ENCODE measurements at regions of chr10 and their contacts with region 1.

Region 1: GRCh38 chr10:75235375-75236177 is at the start of gene COMTD1:
- DNase-seq: peak; percentile 87
- ATAC-seq: peak; percentile 72
- H3K4me3 ChIP-seq: peak within 1 kb of the TSS; percentile 71 to 78
- H3K27ac ChIP-seq: peak within 1 kb of the TSS; percentile 92
- H3K4me1 ChIP-seq: peaks cover 2 to 27% of the 10 kb centered on the region in 2 experiments; a peak in 3 of 4 replicates
- H3K27me3 ChIP-seq: no peaks in the 10 kb centered on the region
- CTCF ChIP-seq: peak; percentile 99 to 100 (median 100)
- POLR2A ChIP-seq: no peak
- RAD21 ChIP-seq: peak; percentile 100
- total RNA-seq, gene COMTD1: 35.1 TPM

Region 2: GRCh38 chr10:74244097-74244685 is 991.4 kb before region 1 on chr10:
- CTCF ChIA-PET with region 1: interaction called, 11 read pairs
- POLR2A ChIA-PET with region 1: no interaction called
- RAD21 ChIA-PET with region 1: interaction called in 1 of 2 experiments, 3 read pairs
- intact Hi-C with region 1: loop called (anchors 5 kb)
- DNase-seq: peak; percentile 42
- ATAC-seq: no peak
- H3K4me3 ChIP-seq: no peak overlapping the region
- H3K27ac ChIP-seq: no peak overlapping the region
- H3K4me1 ChIP-seq: no peaks in the 10 kb centered on the region
- H3K27me3 ChIP-seq: no peaks in the 10 kb centered on the region
- CTCF ChIP-seq: peak; percentile 32 to 65 (median 60)
- POLR2A ChIP-seq: no peak
- RAD21 ChIP-seq: peak; percentile 73

Region 3: GRCh38 chr10:74262856-74263255 is 972.7 kb before region 1 on chr10:
- CTCF ChIA-PET with region 1: interaction called, 4 read pairs
- POLR2A ChIA-PET with region 1: no interaction called
- RAD21 ChIA-PET with region 1: no interaction called
- intact Hi-C with region 1: loop called (anchors 2 kb)
- DNase-seq: no peak
- ATAC-seq: no peak
- H3K4me3 ChIP-seq: no peak overlapping the region
- H3K27ac ChIP-seq: no peak overlapping the region
- H3K4me1 ChIP-seq: peaks cover 0 to 7% of the 10 kb centered on the region in 2 experiments; a peak in 1 of 4 replicates
- H3K27me3 ChIP-seq: no peaks in the 10 kb centered on the region
- CTCF ChIP-seq: no peak
- POLR2A ChIP-seq: no peak
- RAD21 ChIP-seq: no peak

Region 4: GRCh38 chr10:74786088-74786487 is 449.5 kb before region 1 on chr10:
- CTCF ChIA-PET with region 1: no interaction called
- POLR2A ChIA-PET with region 1: no interaction called
- RAD21 ChIA-PET with region 1: no interaction called
- intact Hi-C with region 1: no loop called
- DNase-seq: no peak
- ATAC-seq: no peak
- H3K4me3 ChIP-seq: no peak overlapping the region
- H3K27ac ChIP-seq: no peak overlapping the region
- H3K4me1 ChIP-seq: no peaks in the 10 kb centered on the region
- H3K27me3 ChIP-seq: no peaks in the 10 kb centered on the region
- CTCF ChIP-seq: no peak
- POLR2A ChIP-seq: no peak
- RAD21 ChIP-seq: no peak

Region 5: DNA sequence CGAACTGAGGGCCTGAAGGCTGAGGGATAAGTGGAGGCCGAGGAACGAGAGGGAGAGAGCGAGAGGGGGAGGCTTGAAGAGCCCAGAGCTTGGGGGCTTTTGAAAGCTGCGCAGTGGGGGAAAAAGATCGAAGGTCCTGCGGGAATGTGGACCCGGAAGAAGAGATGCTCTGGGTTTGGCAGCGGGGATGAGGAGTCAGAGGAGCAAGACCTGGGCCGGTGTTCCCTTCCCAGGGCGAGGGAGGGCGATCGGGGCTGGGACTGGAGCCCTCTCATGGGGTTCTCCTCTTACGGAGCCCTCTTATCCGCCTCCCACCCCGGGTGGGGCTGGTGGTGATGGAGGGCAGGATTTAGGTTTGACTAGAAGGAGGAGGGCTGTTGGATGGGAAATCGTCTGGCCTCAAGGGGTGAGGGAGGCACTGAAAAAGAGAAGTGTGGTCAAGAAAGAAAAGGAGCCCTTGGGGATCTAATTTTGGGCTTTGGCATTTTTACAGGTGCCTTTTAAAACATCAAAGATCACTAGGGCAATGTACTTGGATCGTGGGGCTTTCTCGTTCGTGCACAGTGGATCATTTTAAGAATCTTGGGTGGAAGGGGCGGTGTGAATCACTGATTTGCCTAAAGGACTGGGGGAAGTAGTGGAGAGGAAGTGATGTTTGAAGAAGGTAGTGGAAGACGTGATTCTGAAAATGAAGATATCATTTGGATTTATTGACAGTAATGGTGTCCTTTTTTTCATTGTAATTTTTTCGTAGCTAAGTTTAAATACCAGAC is 123.5 kb before region 1 on chr10:
- CTCF ChIA-PET with region 1: interaction called, 6 read pairs
- POLR2A ChIA-PET with region 1: interaction called, 3 read pairs
- RAD21 ChIA-PET with region 1: interaction called in 1 of 2 experiments, 3 read pairs
- intact Hi-C with region 1: loop called (anchors 2 kb)
- DNase-seq: peak; percentile 1
- ATAC-seq: peak; percentile 35
- H3K4me3 ChIP-seq: peak overlapping the region; percentile 78 to 95
- H3K27ac ChIP-seq: peak overlapping the region; percentile 85
- H3K4me1 ChIP-seq: peaks cover 13 to 57% of the 10 kb centered on the region in 2 experiments; a peak in 3 of 4 replicates
- H3K27me3 ChIP-seq: no peaks in the 10 kb centered on the region
- CTCF ChIP-seq: no peak
- POLR2A ChIP-seq: no peak
- RAD21 ChIP-seq: no peak

Region 6: DNA sequence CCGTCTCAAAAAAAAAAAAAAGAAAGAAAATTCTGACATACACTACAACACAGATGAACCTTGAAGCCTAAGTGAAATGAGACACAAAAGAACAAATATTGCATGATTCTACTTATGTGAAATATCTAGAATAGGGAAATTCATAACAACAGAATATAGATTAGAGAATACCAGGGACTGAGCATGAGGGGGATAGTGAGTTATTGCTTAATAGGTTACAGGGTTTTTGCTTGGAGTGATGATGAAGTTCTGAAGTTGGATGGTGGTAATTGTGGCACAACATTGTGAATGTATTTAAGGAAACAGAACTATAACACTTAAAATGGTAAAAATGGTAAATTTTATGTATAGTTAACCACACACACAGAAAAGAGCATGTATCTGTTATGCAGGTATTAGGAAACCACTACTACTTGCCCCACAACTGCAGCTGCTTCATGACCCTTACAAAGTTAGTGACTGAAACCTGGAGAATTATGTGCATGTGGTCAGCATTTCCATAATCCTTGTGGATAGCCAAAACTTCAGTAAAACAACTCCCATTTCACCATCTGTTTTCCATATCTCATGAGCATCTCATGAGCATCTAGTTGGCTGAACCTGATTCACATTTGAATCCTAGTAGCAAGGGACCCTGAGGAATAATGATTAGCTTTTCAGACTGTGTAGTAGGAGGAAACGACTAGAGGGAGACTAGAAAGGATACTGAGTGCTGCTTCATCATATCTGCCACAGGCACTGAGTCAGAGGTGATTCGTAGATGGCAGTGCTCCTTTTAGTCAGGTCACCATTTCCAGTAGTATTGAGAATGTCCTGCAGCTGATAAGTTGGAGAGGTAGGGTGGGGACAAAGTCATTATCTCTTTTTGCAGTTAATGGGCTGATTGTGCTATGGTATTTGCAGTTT is 97.8 kb before region 1 on chr10:
- CTCF ChIA-PET with region 1: no interaction called
- POLR2A ChIA-PET with region 1: no interaction called
- RAD21 ChIA-PET with region 1: no interaction called
- intact Hi-C with region 1: no loop called
- DNase-seq: peak; percentile 38
- ATAC-seq: peak; percentile 89
- H3K4me3 ChIP-seq: peak overlapping the region in 1 of 2 experiments; percentile 9; a peak in 1 of 4 replicates
- H3K27ac ChIP-seq: peak overlapping the region; percentile 27; the same call in 1 of the 2 replicates
- H3K4me1 ChIP-seq: peaks cover 39 to 52% of the 10 kb centered on the region in 2 experiments
- H3K27me3 ChIP-seq: no peaks in the 10 kb centered on the region
- CTCF ChIP-seq: no peak
- POLR2A ChIP-seq: no peak
- RAD21 ChIP-seq: no peak

Region 7: GRCh38 chr10:75187961-75188426 is 47.6 kb before region 1 on chr10:
- CTCF ChIA-PET with region 1: interaction called, 47 read pairs
- POLR2A ChIA-PET with region 1: interaction called, 4 read pairs
- RAD21 ChIA-PET with region 1: interaction called, 4 to 7 read pairs
- intact Hi-C with region 1: loop called (anchors 1 kb)
- DNase-seq: peak; percentile 52
- ATAC-seq: peak; percentile 87
- H3K4me3 ChIP-seq: no peak overlapping the region
- H3K27ac ChIP-seq: no peak overlapping the region
- H3K4me1 ChIP-seq: peaks cover 0 to 11% of the 10 kb centered on the region in 2 experiments; a peak in 2 of 4 replicates
- H3K27me3 ChIP-seq: no peaks in the 10 kb centered on the region
- CTCF ChIP-seq: peak; percentile 77 to 89 (median 86)
- POLR2A ChIP-seq: no peak
- RAD21 ChIP-seq: peak; percentile 86

Region 8: GRCh38 chr10:75210282-75211006 is 25.1 kb before region 1 on chr10 and contains the start of gene VDAC2:
- CTCF ChIA-PET with region 1: interaction called, 7 read pairs
- POLR2A ChIA-PET with region 1: interaction called, 14 read pairs
- RAD21 ChIA-PET with region 1: interaction called in 1 of 2 experiments, 3 read pairs
- intact Hi-C with region 1: no loop called
- DNase-seq: peak; percentile 68
- ATAC-seq: peak; percentile 91
- H3K4me3 ChIP-seq: peak within 1 kb of the TSS; percentile 85
- H3K27ac ChIP-seq: peak within 1 kb of the TSS; percentile 84
- H3K4me1 ChIP-seq: peaks cover 21 to 50% of the 10 kb centered on the region in 2 experiments
- H3K27me3 ChIP-seq: no peaks in the 10 kb centered on the region
- CTCF ChIP-seq: no peak
- POLR2A ChIP-seq: no peak
- RAD21 ChIP-seq: no peak
- total RNA-seq, gene VDAC2: 289 TPM

Region 9: GRCh38 chr10:75294518-75294865 is 58.9 kb after region 1 on chr10:
- CTCF ChIA-PET with region 1: no interaction called
- POLR2A ChIA-PET with region 1: no interaction called
- RAD21 ChIA-PET with region 1: no interaction called
- intact Hi-C with region 1: no loop called
- DNase-seq: no peak
- ATAC-seq: peak; percentile 53
- H3K4me3 ChIP-seq: peak overlapping the region; percentile 41 to 58
- H3K27ac ChIP-seq: no peak overlapping the region; the same call in 1 of the 2 replicates
- H3K4me1 ChIP-seq: peaks cover 13 to 38% of the 10 kb centered on the region in 2 experiments
- H3K27me3 ChIP-seq: no peaks in the 10 kb centered on the region
- CTCF ChIP-seq: no peak
- POLR2A ChIP-seq: no peak
- RAD21 ChIP-seq: no peak

Region 10: GRCh38 chr10:75469006-75469616 is 233.5 kb after region 1 on chr10:
- CTCF ChIA-PET with region 1: no interaction called
- POLR2A ChIA-PET with region 1: no interaction called
- RAD21 ChIA-PET with region 1: no interaction called
- intact Hi-C with region 1: no loop called
- DNase-seq: no peak
- ATAC-seq: no peak
- H3K4me3 ChIP-seq: no peak overlapping the region
- H3K27ac ChIP-seq: no peak overlapping the region
- H3K4me1 ChIP-seq: peaks cover 0 to 6% of the 10 kb centered on the region in 2 experiments; a peak in 1 of 4 replicates
- H3K27me3 ChIP-seq: no peaks in the 10 kb centered on the region
- CTCF ChIP-seq: no peak
- POLR2A ChIP-seq: no peak
- RAD21 ChIP-seq: no peak

Region 11: DNA sequence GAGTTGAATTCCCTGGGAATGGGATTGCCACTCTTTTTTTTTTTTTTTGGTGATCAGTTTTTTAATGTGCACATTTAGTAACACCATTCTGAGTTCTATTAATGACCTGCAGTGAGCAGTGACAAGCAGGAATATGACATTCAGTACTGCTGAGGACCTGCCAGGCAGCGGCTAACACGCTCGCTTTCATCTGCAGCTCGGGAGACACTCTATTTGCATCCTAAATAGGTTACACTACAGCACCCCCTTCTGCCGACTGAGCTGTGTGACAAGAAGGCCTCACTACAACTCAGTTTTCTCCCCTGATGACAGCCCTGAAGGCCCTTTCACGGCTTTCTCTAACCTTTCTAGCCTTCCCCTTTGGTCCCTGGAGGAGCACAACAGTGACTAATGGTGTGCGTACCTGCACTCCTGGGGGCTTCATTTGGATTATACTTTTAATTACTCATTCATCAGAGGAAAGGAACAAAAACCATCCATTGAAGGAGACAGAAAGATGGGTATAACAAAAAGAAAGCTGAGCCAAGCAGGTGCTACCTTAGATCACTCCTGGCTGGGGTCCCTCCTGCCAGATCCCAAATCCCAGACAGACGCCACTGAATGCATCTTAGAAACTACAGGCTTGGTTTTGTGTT is 1068.2 kb after region 1 on chr10:
- CTCF ChIA-PET with region 1: interaction called, 3 read pairs
- POLR2A ChIA-PET with region 1: no interaction called
- RAD21 ChIA-PET with region 1: no interaction called
- intact Hi-C with region 1: loop called (anchors 5 kb)
- DNase-seq: peak; percentile 28
- ATAC-seq: peak; percentile 92
- H3K4me3 ChIP-seq: no peak overlapping the region
- H3K27ac ChIP-seq: no peak overlapping the region
- H3K4me1 ChIP-seq: no peaks in the 10 kb centered on the region
- H3K27me3 ChIP-seq: peaks cover 14% of the 10 kb centered on the region; the same call in 1 of the 2 replicates
- CTCF ChIP-seq: peak; percentile 29 to 55 (median 45); a peak in 4 of 6 replicates
- POLR2A ChIP-seq: no peak
- RAD21 ChIP-seq: peak; percentile 69

Measured in HCT116 (cell line).